HepG2 (cell line): ENCODE measurements at regions of chrX and their contacts with region 1.

Region 1: GRCh38 chrX:140057001-140057411 is 91.7 kb upstream of the CXorf66 start:
- DNase-seq: peak; percentile 51
- ATAC-seq: peak; percentile 99
- H3K4me3 ChIP-seq: no peak overlapping the region
- H3K27ac ChIP-seq: no peak overlapping the region
- H3K4me1 ChIP-seq: no peaks in the 10 kb centered on the region
- H3K27me3 ChIP-seq: no peaks in the 10 kb centered on the region
- CTCF ChIP-seq: peak; percentile 77
- EP300 ChIP-seq: no peak
- POLR2A ChIP-seq: no peak
- RAD21 ChIP-seq: 0 out of 2 replicates have a peak, but pooled peaks have one; percentile 27

Region 2: GRCh38 chrX:140141444-140142029 is 84.5 kb after region 1 on chrX:
- CTCF ChIA-PET with region 1: interaction called, 6 read pairs
- POLR2A ChIA-PET with region 1: no interaction called
- in situ Hi-C with region 1: no loop called
- intact Hi-C with region 1: loop called (anchors 1 kb)
- DNase-seq: peak; percentile 8
- ATAC-seq: no peak
- H3K4me3 ChIP-seq: no peak overlapping the region
- H3K27ac ChIP-seq: no peak overlapping the region
- H3K4me1 ChIP-seq: no peaks in the 10 kb centered on the region
- H3K27me3 ChIP-seq: no peaks in the 10 kb centered on the region
- CTCF ChIP-seq: peak; percentile 48
- EP300 ChIP-seq: no peak
- POLR2A ChIP-seq: no peak
- RAD21 ChIP-seq: no peak

Region 3: DNA sequence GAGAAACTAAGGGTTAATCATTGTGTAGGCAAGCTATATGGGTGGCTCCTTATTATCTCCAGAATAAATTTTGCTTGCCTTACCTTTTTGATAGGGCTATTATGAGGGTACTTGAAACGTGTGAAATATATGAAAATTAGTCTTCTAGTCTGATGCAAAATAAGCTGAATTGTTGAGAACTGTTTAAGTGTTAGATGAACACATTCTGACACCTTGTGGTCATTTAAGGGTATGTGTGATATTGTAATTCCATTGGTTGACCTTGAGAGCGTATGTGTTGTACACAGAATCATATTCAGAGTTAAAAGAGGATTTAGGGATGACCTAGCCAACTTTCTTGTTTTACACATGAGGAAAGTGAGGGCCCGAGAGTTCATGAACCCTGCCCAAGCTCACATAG is 607.9 kb after region 1 on chrX:
- CTCF ChIA-PET with region 1: interaction called, 3 read pairs
- POLR2A ChIA-PET with region 1: no interaction called
- in situ Hi-C with region 1: loop called (anchors 25 kb)
- intact Hi-C with region 1: loop called (anchors 2 kb)
- DNase-seq: peak; percentile 15
- ATAC-seq: peak; percentile 55
- H3K4me3 ChIP-seq: no peak overlapping the region
- H3K27ac ChIP-seq: no peak overlapping the region
- H3K4me1 ChIP-seq: no peaks in the 10 kb centered on the region
- H3K27me3 ChIP-seq: no peaks in the 10 kb centered on the region; a peak in 1 of 5 replicates
- CTCF ChIP-seq: peak; percentile 37; the same call in 1 of the 2 replicates
- EP300 ChIP-seq: no peak
- POLR2A ChIP-seq: no peak
- RAD21 ChIP-seq: no peak

Region 4: DNA sequence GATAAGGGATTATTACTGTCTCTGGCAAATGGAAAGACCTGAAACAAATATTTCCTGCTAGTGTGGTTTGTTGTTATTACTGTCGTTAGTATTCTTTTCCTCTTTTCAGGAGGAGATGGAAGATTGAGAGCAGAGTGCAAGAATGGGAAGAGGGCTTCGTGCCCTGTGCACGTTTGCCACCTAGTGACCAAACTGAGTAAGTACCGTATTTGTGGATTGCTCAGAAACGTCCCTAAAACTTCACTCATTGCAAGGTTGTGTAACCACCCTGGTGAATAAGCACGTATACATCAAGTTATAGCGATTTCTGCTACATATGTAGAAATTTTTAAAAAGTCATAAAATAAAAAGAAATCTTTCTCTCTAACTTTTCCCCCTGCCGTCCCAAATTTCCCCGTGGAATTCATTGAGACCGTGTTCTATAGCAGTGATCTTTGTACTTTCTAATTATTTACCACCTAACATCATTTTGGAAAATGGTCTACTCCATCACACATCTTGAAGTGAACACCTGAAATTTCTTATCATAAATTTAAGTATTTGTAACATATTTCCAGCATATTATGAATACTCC is 676.9 kb after region 1 on chrX:
- CTCF ChIA-PET with region 1: no interaction called
- POLR2A ChIA-PET with region 1: no interaction called
- in situ Hi-C with region 1: no loop called
- intact Hi-C with region 1: loop called (anchors 2 kb)
- DNase-seq: peak; percentile 5
- ATAC-seq: peak; percentile 76
- H3K4me3 ChIP-seq: no peak overlapping the region
- H3K27ac ChIP-seq: no peak overlapping the region
- H3K4me1 ChIP-seq: no peaks in the 10 kb centered on the region
- H3K27me3 ChIP-seq: no peaks in the 10 kb centered on the region
- CTCF ChIP-seq: peak; percentile 74
- EP300 ChIP-seq: no peak
- POLR2A ChIP-seq: no peak
- RAD21 ChIP-seq: no peak